ENCODE measurements at regions of chr5 and their contacts with region 1.

Region 1: DNA sequence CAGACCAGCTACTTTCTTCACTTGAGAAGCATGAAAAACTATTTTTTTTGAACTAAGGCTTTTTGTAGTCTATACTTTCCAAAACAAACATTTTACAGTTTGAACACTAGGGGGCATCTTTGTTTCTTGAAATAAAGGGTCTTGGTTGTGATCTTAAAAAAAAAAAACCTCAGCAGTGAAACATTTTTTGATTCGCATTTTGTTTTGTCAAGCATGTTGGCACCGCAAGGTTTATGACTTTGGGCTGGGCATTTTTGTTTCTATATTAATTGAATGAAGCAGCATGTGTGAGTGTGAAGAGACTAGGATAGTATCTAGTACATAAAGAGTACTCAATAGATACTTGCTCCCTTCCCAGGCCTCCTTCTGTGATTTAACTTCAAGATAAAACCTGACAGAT is 31.6 kb upstream of the ACOT12 start:
- DNase-seq: no peak
- H3K4me3 ChIP-seq: no peak overlapping the region
- H3K27ac ChIP-seq: no peak overlapping the region
- H3K4me1 ChIP-seq: peaks cover 3 to 5% of the 10 kb centered on the region in 2 donors
- H3K27me3 ChIP-seq: no peaks in the 10 kb centered on the region
- CTCF ChIP-seq: peak in 4 of 6 experiments; percentile 53 to 70 (median 61)
- POLR2A ChIP-seq: no peak

Region 2: DNA sequence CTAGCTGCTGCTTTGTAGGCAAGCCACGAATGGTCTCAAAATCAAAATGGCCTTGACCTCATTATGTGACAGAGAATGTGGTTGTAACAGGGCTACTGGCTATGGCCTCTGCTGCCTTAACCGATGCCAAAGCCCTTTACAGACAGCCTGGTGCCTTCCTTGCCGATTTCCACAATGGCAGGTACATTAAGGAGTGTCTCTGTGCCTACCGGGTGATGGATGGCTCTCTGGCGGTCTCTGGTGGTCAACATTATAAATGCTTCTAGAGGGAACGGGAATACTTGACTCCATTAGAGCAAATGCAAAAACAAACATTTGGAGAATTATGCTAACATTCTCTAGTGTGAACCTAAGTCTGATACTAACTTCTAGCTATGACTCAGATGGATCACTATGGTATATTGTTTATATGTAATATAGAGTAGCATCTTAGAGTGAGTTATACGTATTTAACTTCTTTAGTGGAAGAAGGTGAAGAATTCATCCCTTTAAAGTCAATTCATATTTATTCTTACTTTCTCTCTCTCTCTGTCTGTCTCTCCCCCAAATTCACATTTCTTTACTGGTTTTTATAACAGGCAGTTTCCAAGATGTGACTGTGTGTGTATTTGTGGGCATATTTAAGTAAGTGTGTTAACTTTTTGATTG is 800.1 kb after region 1 on chr5:
- intact Hi-C with region 1: loop called (anchors 10 kb)
- DNase-seq: peak; percentile 59 to 66
- H3K4me3 ChIP-seq: no peak overlapping the region
- H3K27ac ChIP-seq: no peak overlapping the region
- H3K4me1 ChIP-seq: no peaks in the 10 kb centered on the region
- H3K27me3 ChIP-seq: no peaks in the 10 kb centered on the region
- CTCF ChIP-seq: peak; percentile 50 to 90 (median 74)
- POLR2A ChIP-seq: no peak